ENCODE measurements at regions of chr15 and their contacts with region 1.

Region 1: DNA sequence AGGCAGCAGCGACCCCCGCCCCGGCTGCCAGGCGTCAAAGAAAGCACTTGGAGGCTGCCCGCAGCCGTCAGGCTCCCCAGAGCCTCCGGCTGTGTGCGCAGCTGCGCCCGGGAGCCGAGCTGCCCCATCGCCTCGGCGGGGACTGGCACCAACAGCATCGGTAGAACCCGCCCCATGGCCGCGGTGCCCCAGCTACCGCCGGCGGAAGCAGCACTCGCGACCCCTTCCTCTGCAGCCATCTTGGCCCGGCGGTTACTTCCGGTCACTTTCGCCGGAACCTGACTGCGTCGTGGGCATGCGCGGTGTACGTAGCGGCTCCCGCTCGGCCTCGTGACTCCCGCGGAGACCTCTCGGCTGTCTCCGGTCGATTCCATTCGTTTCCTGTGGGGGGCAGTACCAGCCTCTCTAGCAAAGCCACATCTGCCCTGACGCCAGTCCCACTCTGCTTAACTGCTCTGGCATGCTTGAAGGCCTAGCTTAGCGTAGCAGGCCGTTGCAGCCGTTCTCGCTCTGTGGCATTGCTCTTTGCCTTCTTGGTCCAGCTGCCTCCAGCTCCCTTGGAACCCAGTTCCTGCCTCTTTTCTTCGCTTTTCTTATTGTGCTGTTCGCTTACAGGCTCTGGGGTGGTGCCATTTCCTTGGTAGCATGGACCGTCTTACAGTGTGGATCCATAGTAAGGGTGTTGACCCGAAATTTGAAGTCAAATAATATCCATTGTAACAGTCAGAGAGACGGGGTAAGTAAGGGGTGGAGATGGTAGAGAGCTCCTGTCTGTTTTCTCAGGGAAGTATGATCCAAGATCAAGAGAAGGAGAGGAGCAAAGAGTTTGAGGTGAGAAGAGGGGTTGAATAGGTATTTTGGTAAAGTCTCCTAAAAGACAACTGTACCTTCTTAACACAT is at the start of gene SPG11:
- H3K4me3 Mint-ChIP-seq: peak within 1 kb of the TSS; percentile 95
- H3K27ac Mint-ChIP-seq: peak within 1 kb of the TSS; percentile 96
- H3K4me1 Mint-ChIP-seq: peaks cover 32% of the 10 kb centered on the region
- H3K27me3 Mint-ChIP-seq: no peaks in the 10 kb centered on the region

Region 2: DNA sequence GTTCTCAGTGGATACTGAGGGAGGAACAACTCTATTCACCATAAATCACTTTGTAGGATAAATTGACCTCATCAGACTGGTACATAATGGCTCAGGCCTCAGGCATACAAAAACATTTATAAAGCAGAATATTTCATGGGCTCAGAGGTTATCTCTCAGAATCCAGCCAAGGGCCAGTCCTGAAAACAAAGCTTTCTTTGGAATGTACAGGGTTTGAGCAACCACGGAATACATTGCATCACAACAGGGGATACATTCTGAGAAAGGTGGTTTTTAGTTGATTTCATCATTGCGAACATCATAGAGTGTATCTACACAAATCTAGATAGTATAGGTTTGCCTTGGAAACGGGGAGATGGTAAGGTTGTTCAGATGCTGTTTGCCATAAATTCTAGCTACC is 269.6 kb before region 1 on chr15:
- intact Hi-C with region 1: no loop called
- H3K4me3 Mint-ChIP-seq: no peak overlapping the region
- H3K27ac Mint-ChIP-seq: no peak overlapping the region
- H3K4me1 Mint-ChIP-seq: no peaks in the 10 kb centered on the region
- H3K27me3 Mint-ChIP-seq: no peaks in the 10 kb centered on the region

Region 3: DNA sequence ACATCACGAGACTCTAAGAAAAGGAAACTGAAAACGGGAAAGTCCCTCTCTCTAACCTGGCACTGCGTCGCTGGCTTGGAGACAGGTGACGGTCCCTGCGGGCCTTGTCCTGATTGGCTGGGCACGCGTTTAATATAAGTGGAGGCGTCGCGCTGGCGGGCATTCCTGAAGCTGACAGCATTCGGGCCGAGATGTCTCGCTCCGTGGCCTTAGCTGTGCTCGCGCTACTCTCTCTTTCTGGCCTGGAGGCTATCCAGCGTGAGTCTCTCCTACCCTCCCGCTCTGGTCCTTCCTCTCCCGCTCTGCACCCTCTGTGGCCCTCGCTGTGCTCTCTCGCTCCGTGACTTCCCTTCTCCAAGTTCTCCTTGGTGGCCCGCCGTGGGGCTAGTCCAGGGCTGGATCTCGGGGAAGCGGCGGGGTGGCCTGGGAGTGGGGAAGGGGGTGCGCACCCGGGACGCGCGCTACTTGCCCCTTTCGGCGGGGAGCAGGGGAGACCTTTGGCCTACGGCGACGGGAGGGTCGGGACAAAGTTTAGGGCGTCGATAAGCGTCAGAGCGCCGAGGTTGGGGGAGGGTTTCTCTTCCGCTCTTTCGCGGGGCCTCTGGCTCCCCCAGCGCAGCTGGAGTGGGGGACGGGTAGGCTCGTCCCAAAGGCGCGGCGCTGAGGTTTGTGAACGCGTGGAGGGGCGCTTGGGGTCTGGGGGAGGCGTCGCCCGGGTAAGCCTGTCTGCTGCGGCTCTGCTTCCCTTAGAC is 47.9 kb after region 1 on chr15 and contains the start of gene B2M:
- intact Hi-C with region 1: loop called (anchors 1 kb)
- H3K4me3 Mint-ChIP-seq: peak within 1 kb of the TSS; percentile 95
- H3K27ac Mint-ChIP-seq: peak within 1 kb of the TSS; percentile 99
- H3K4me1 Mint-ChIP-seq: peaks cover 38% of the 10 kb centered on the region
- H3K27me3 Mint-ChIP-seq: no peaks in the 10 kb centered on the region

Region 4: GRCh38 chr15:44738340-44738984 is 74.8 kb after region 1 on chr15:
- intact Hi-C with region 1: loop called (anchors 1 kb)
- H3K4me3 Mint-ChIP-seq: no peak overlapping the region
- H3K27ac Mint-ChIP-seq: no peak overlapping the region
- H3K4me1 Mint-ChIP-seq: peaks cover 31% of the 10 kb centered on the region
- H3K27me3 Mint-ChIP-seq: no peaks in the 10 kb centered on the region

Region 5: DNA sequence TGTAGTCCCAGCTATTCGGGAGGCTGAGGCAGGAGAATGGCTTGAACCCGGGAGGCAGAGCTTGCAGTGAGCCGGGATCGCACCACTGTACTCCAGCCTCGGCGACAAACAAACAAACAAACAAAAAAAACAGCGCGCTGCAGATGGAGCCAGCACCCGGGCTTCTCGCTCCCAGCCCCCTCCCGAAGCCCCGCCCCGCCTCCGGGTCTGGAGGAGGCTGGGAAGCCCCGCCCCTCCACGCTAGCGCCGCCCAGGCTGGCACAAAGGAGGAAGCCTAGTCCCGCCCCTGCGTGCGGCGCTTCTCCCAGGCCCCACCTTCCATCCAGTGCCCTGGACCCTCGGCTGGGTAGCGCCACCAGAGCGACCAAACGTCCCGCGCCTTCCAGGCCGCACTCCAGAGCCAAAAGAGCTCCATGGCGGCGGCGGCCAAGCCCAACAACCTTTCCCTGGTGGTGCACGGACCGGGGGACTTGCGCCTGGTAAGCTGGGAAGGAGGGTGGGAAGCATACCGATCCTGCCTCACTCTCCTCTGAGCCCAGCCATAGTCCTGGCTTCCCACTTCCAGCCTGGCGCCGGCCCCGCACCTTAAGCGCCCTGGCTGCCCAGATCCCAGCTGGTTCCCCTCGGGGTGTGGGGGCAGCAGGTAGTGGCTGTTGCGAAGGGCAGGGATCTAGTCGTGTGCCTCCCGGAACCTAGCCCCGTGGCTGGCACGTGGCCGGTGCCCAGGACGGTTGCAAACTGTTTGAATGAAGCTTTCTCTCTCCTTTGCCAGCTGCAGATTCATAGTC is 359.4 kb after region 1 on chr15 and contains the start of gene SORD:
- intact Hi-C with region 1: loop called (anchors 5 kb)
- H3K4me3 Mint-ChIP-seq: peak within 1 kb of the TSS; percentile 91
- H3K27ac Mint-ChIP-seq: peak within 1 kb of the TSS; percentile 87
- H3K4me1 Mint-ChIP-seq: peaks cover 40% of the 10 kb centered on the region
- H3K27me3 Mint-ChIP-seq: peaks cover 29% of the 10 kb centered on the region